ENCODE measurements at regions of chr6 and their contacts with region 1.

Region 1: DNA sequence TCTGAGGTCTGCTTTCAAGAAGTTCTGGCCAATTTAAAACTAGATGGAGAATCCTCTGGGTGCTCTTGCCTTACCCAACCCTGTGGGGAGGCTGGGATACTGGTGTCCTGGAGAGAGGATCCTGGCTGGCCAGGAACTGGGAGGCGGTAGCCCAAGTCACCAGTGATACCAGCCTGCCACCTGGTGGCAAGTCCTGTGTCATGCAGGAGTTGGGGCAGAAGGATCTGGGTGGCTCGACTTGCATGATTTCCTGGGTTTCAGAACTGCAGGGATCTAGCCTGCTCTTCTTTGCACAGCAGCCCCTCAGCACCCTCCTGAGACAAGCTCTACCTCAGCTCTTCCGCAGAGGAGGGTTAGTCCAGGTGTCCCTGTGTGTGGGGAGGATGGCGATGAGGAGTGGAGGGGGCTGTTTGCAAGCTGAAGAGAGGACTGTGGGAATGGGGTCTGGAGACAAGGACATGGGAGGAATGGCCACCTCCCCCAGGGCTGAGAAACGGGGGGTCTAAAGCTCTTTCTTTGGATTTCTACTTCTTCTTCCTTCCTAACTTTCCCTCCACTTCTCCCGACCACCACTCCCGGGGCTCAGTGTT is 4.2 kb downstream of the KCNK17 start:
- DNase-seq: peak; percentile 53 to 92
- H3K4me3 ChIP-seq: no peak overlapping the region
- H3K27ac ChIP-seq: no peak overlapping the region
- H3K4me1 ChIP-seq: peaks cover 0 to 5% (median 3%) of the 10 kb centered on the region in 4 experiments; a peak in 4 of 7 replicates
- H3K27me3 ChIP-seq: peaks cover 21 to 43% (median 38%) of the 10 kb centered on the region in 4 experiments
- CTCF ChIP-seq: peak in 2 of 3 experiments; percentile 97 to 99; a peak in 3 of 4 replicates
- EP300 ChIP-seq: no peak
- POLR2A ChIP-seq: no peak
- RAD21 ChIP-seq: peak; percentile 99 to 100

Region 2: GRCh38 chr6:39128106-39128505 is 181.9 kb before region 1 on chr6:
- CTCF ChIA-PET with region 1: interaction called, 14 read pairs
- POLR2A ChIA-PET with region 1: no interaction called
- DNase-seq: no peak
- H3K4me3 ChIP-seq: no peak overlapping the region
- H3K27ac ChIP-seq: no peak overlapping the region
- H3K4me1 ChIP-seq: peaks cover 0 to 5% (median 0%) of the 10 kb centered on the region in 4 experiments; a peak in 1 of 7 replicates
- H3K27me3 ChIP-seq: peaks cover 0 to 1% (median 0%) of the 10 kb centered on the region in 4 experiments; a peak in 2 of 7 replicates
- CTCF ChIP-seq: no peak
- EP300 ChIP-seq: no peak
- POLR2A ChIP-seq: no peak
- RAD21 ChIP-seq: no peak

Region 3: DNA sequence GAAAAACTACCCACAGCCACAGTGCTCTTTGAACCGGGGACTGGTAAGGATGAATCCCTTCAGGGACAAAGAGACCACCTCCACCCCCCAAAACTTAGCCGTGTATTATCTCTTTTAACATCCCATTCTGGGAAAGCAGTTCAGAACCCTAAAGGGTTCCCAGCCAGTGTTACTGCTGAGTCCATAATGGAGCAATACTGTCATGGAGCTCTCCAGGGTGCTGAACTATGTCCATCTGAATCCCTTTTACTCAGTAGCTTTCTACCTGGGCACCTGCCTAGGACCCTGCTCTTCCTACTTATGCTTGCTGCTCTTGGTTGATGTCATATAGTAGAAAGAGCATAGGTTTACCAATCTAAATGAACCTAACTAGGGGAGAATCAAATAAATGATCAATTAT is 172.8 kb before region 1 on chr6:
- CTCF ChIA-PET with region 1: interaction called, 11 read pairs
- POLR2A ChIA-PET with region 1: no interaction called
- DNase-seq: peak in 1 of 2 experiments; percentile 66
- H3K4me3 ChIP-seq: no peak overlapping the region
- H3K27ac ChIP-seq: no peak overlapping the region
- H3K4me1 ChIP-seq: no peaks in the 10 kb centered on the region
- H3K27me3 ChIP-seq: no peaks in the 10 kb centered on the region
- CTCF ChIP-seq: no peak
- EP300 ChIP-seq: no peak
- POLR2A ChIP-seq: no peak
- RAD21 ChIP-seq: no peak

Region 4: GRCh38 chr6:39322306-39322850 is 12.3 kb after region 1 on chr6 and contains the start of gene KCNK16:
- CTCF ChIA-PET with region 1: interaction called, 25 read pairs
- POLR2A ChIA-PET with region 1: interaction called, 6 read pairs
- DNase-seq: no peak
- H3K4me3 ChIP-seq: no peak within 1 kb of the TSS
- H3K27ac ChIP-seq: no peak within 1 kb of the TSS
- H3K4me1 ChIP-seq: no peaks in the 10 kb centered on the region
- H3K27me3 ChIP-seq: no peaks in the 10 kb centered on the region
- CTCF ChIP-seq: no peak
- EP300 ChIP-seq: no peak
- POLR2A ChIP-seq: no peak
- RAD21 ChIP-seq: no peak
- total RNA-seq, gene KCNK16: not detected in 2 replicates

Region 5: DNA sequence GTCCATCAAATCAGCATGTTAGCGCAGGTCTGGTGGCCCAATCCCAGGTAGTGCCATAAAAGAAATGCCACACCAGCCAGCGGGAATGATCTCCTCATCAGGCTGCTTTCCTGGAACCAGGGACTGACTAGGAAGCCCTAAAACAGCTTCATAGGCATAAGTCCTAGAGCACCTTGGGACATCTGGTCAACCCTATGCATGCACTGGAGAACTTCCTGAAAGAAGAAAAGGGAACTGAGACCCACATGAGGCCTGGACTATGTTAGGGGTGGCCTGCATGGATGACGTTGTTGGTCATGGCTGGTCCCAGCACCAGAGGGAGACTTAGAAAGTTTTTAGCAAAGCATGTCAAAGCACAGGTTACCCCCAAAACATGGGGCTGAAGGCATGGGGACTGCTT is 20.0 kb after region 1 on chr6:
- CTCF ChIA-PET with region 1: interaction called, 10 read pairs
- POLR2A ChIA-PET with region 1: interaction called, 6 read pairs
- DNase-seq: no peak
- H3K4me3 ChIP-seq: no peak overlapping the region
- H3K27ac ChIP-seq: no peak overlapping the region
- H3K4me1 ChIP-seq: no peaks in the 10 kb centered on the region
- H3K27me3 ChIP-seq: no peaks in the 10 kb centered on the region
- CTCF ChIP-seq: no peak
- EP300 ChIP-seq: no peak
- POLR2A ChIP-seq: no peak
- RAD21 ChIP-seq: no peak